K562 (cell line): ENCODE measurements at regions of chr6 and their contacts with region 1.

Region 1: DNA sequence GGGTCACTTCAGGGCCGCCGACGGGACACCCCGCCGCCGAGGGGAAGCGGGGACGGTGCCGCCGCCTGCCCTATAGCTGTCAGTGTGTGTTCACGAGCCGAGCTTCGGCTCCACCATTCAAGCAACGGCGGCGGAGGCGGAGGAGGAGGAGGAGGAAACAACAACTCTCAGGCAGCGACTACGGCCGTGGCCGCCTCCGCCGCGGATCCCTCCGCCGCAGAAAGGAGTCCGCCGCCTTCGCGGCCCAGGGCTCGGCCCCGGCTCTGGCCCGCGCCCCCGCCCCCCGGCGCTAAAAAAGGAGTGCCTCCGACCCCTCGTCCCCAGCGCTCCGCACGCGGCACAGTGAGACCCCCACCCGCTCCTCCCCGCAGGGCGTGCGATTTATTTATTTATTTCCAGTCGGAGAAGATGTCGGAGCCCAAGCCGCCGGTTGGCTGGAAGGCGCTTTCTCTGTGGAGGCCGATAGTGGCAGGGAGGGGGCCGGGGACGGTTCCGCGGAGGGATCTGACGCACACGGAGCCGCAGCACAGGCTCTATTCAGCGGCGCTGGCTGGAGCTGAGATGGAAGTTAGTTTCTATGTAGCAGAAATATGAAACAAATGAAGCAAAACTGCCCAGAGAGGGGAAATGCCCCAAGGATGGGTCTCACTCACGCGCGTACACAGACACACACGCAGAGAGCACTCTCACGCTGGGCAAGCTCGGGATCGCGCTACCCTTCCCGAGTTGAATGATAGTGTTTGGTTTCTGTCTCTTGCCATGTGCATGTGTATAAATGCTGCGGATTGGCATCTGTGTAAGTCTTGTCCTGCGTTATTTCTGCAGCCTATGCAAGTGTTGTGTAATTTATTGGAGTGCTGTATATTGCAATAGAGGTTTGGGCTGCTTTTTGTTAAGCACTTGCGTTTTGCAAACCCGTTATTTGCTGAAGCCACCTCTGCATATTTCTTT is at the start of gene PHIP:
- DNase-seq: peak; percentile 80 to 94 (median 82)
- ATAC-seq: peak; percentile 78
- H3K4me3 ChIP-seq: peak within 1 kb of the TSS; percentile 83
- H3K27ac ChIP-seq: peak within 1 kb of the TSS; percentile 95
- H3K4me1 ChIP-seq: peaks cover 0 to 9% of the 10 kb centered on the region in 2 experiments; a peak in 3 of 5 replicates
- H3K27me3 ChIP-seq: no peaks in the 10 kb centered on the region
- CTCF ChIP-seq: no peak
- EP300 ChIP-seq: no peak; the same call in none of the 2 replicates
- POLR2A ChIP-seq: peak; percentile 90
- RAD21 ChIP-seq: no peak
- polyA plus RNA-seq, gene PHIP: 8.1 to 8.9 TPM

Region 2: DNA sequence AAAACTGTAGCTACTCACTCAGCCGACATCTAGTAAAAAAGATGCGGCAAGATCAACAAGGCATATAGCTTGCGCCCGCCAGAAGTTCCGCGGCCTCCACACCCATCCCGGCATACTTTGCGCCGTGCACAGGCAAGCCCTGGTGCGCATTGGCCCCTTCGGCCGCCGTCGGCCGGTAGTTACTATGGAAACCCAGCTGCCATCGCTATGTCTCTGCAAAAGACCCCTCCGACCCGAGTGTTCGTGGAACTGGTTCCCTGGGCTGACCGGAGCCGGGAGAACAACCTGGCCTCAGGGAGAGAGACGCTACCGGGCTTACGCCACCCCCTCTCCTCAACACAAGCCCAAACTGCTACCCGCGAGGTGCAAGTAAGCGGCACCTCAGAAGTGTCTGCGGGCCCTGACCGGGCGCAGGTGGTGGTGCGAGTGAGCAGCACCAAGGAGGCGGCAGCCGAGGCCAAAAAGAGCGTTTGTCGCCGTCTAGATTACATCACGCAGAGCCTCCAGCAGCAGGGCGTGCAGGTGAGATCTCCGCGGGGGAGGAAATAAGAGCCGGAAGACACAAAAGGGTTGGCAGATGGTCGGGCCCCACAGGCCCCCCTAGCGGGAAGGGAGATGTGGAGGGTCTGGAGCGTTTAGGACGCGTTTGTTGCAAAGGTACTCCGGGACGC is 210.8 kb before region 1 on chr6 and contains the start of gene IRAK1BP1:
- CTCF ChIA-PET with region 1: no interaction called
- POLR2A ChIA-PET with region 1: no interaction called
- in situ Hi-C with region 1: no loop called
- intact Hi-C with region 1: loop called (anchors 5 kb)
- DNase-seq: peak; percentile 58 to 84 (median 70)
- ATAC-seq: peak; percentile 95
- H3K4me3 ChIP-seq: peak within 1 kb of the TSS; percentile 80
- H3K27ac ChIP-seq: peak within 1 kb of the TSS; percentile 82
- H3K4me1 ChIP-seq: peaks cover 0 to 7% of the 10 kb centered on the region in 2 experiments; a peak in 1 of 5 replicates
- H3K27me3 ChIP-seq: no peaks in the 10 kb centered on the region
- CTCF ChIP-seq: no peak; a peak in 1 of 6 replicates
- EP300 ChIP-seq: no peak
- POLR2A ChIP-seq: peak; percentile 70
- RAD21 ChIP-seq: no peak
- polyA plus RNA-seq, gene IRAK1BP1: 1.8 to 2.1 TPM

Region 3: DNA sequence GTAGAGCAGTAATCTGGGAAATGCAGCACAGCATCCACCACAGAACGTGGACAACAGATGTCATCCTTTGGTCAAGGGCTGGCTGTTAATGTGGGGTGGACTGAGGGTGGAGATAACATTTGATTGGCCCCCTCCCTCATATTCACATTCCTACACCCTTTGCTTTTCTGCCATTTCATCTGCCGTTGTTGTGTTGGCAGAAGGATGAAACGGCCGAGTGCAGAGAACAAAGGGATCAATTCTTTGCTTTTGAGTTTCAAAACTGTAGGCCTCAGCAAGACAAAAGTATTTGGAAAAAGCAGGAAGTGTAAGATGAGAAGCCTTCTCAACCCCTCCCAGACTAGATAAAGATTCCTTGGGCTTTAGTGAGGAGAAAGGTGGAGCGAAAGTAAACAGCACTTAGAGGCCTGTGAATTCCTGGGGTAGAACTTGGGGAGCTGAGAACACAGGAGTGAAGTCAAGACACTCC is 74.0 kb after region 1 on chr6:
- CTCF ChIA-PET with region 1: no interaction called
- POLR2A ChIA-PET with region 1: no interaction called
- in situ Hi-C with region 1: no loop called
- intact Hi-C with region 1: no loop called
- DNase-seq: peak in 2 of 4 experiments; percentile 12 to 24
- ATAC-seq: peak; percentile 65
- H3K4me3 ChIP-seq: no peak overlapping the region
- H3K27ac ChIP-seq: no peak overlapping the region
- H3K4me1 ChIP-seq: peaks cover 0 to 6% of the 10 kb centered on the region in 2 experiments; a peak in 2 of 5 replicates
- H3K27me3 ChIP-seq: no peaks in the 10 kb centered on the region
- CTCF ChIP-seq: no peak
- EP300 ChIP-seq: no peak
- POLR2A ChIP-seq: no peak
- RAD21 ChIP-seq: no peak

Region 4: GRCh38 chr6:79233611-79234149 is 155.3 kb after region 1 on chr6:
- CTCF ChIA-PET with region 1: no interaction called
- POLR2A ChIA-PET with region 1: interaction called, 3 read pairs
- in situ Hi-C with region 1: no loop called
- intact Hi-C with region 1: loop called (anchors 5 kb)
- DNase-seq: peak; percentile 69 to 87 (median 74)
- ATAC-seq: peak; percentile 92
- H3K4me3 ChIP-seq: peak overlapping the region; percentile 55
- H3K27ac ChIP-seq: peak overlapping the region; percentile 76
- H3K4me1 ChIP-seq: peaks cover 4 to 5% of the 10 kb centered on the region in 2 experiments; a peak in 2 of 5 replicates
- H3K27me3 ChIP-seq: no peaks in the 10 kb centered on the region
- CTCF ChIP-seq: peak in 2 of 3 experiments; percentile 17 to 23; a peak in 2 of 6 replicates
- EP300 ChIP-seq: no peak
- POLR2A ChIP-seq: peak; percentile 62; the same call in 1 of the 2 replicates
- RAD21 ChIP-seq: no peak

Region 5: GRCh38 chr6:79250107-79250514 is 171.8 kb after region 1 on chr6:
- CTCF ChIA-PET with region 1: no interaction called
- POLR2A ChIA-PET with region 1: no interaction called
- in situ Hi-C with region 1: no loop called
- intact Hi-C with region 1: loop called (anchors 5 kb)
- DNase-seq: peak in 2 of 4 experiments; percentile 10 to 26
- ATAC-seq: peak; percentile 41; the same call in 1 of the 3 replicates
- H3K4me3 ChIP-seq: no peak overlapping the region
- H3K27ac ChIP-seq: no peak overlapping the region
- H3K4me1 ChIP-seq: no peaks in the 10 kb centered on the region
- H3K27me3 ChIP-seq: no peaks in the 10 kb centered on the region
- CTCF ChIP-seq: peak in 1 of 3 experiments; percentile 41; a peak in 1 of 6 replicates
- EP300 ChIP-seq: no peak
- POLR2A ChIP-seq: no peak
- RAD21 ChIP-seq: no peak

Region 6: GRCh38 chr6:79536954-79537747 is 458.8 kb after region 1 on chr6 and contains the start of gene LCA5:
- CTCF ChIA-PET with region 1: no interaction called
- POLR2A ChIA-PET with region 1: no interaction called
- in situ Hi-C with region 1: no loop called
- intact Hi-C with region 1: loop called (anchors 5 kb)
- DNase-seq: peak; percentile 88 to 97 (median 92)
- ATAC-seq: peak; percentile 95
- H3K4me3 ChIP-seq: peak within 1 kb of the TSS; percentile 82
- H3K27ac ChIP-seq: peak within 1 kb of the TSS; percentile 80
- H3K4me1 ChIP-seq: peaks cover 10% of the 10 kb centered on the region in 2 experiments; a peak in 4 of 5 replicates
- H3K27me3 ChIP-seq: no peaks in the 10 kb centered on the region
- CTCF ChIP-seq: no peak
- EP300 ChIP-seq: no peak
- POLR2A ChIP-seq: peak; percentile 88
- RAD21 ChIP-seq: no peak
- polyA plus RNA-seq, gene LCA5: 1.0 to 1.3 TPM